ENCODE measurements at regions of chr20 and their contacts with region 1.

Region 1: GRCh38 chr20:50120897-50121693 is 8.1 kb upstream of the UBE2V1 start:
- DNase-seq: peak; percentile 75
- H3K4me3 Mint-ChIP-seq: no peak overlapping the region
- H3K27ac Mint-ChIP-seq: no peak overlapping the region
- H3K4me1 Mint-ChIP-seq: peaks cover 8% of the 10 kb centered on the region
- H3K27me3 Mint-ChIP-seq: no peaks in the 10 kb centered on the region
- CTCF ChIP-seq: peak; percentile 89

Region 2: DNA sequence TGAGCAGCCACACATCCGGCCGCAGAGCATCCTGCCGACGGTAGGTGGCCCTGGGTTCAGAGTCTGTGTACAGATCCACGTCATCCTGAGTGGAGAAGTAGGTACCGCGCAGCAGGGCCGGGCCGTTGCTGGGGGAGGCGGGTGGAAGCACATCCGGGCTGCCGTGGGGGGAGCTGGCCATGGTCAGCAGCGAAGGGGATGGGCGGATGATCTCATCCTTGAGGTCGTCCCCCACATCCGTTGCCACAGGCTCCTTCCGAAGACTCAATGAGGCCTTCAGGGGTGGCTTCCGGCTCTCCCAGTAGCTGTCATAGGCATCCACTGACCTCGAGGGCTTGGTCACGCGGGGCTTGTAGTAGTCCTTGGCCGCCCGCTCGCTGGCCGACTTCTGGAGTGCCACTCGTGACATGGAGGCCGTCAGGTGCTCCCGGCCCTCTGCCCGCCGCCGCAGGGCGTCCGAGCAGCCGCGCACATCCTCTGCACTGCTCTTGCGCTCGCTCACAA is 214.9 kb before region 1 on chr20:
- CTCF ChIA-PET with region 1: no interaction called
- POLR2A ChIA-PET with region 1: no interaction called
- intact Hi-C with region 1: no loop called
- DNase-seq: no peak
- H3K4me3 Mint-ChIP-seq: no peak overlapping the region
- H3K27ac Mint-ChIP-seq: no peak overlapping the region
- H3K4me1 Mint-ChIP-seq: no peaks in the 10 kb centered on the region
- H3K27me3 Mint-ChIP-seq: no peaks in the 10 kb centered on the region
- CTCF ChIP-seq: no peak

Region 3: GRCh38 chr20:50085452-50086365 is 35.4 kb before region 1 on chr20:
- CTCF ChIA-PET with region 1: interaction called, 36 read pairs
- POLR2A ChIA-PET with region 1: interaction called, 177 read pairs
- intact Hi-C with region 1: no loop called
- DNase-seq: peak; percentile 75
- H3K4me3 Mint-ChIP-seq: peak overlapping the region; percentile 8
- H3K27ac Mint-ChIP-seq: peak overlapping the region; percentile 77
- H3K4me1 Mint-ChIP-seq: peaks cover 33% of the 10 kb centered on the region
- H3K27me3 Mint-ChIP-seq: no peaks in the 10 kb centered on the region
- CTCF ChIP-seq: peak; percentile 60

Region 4: DNA sequence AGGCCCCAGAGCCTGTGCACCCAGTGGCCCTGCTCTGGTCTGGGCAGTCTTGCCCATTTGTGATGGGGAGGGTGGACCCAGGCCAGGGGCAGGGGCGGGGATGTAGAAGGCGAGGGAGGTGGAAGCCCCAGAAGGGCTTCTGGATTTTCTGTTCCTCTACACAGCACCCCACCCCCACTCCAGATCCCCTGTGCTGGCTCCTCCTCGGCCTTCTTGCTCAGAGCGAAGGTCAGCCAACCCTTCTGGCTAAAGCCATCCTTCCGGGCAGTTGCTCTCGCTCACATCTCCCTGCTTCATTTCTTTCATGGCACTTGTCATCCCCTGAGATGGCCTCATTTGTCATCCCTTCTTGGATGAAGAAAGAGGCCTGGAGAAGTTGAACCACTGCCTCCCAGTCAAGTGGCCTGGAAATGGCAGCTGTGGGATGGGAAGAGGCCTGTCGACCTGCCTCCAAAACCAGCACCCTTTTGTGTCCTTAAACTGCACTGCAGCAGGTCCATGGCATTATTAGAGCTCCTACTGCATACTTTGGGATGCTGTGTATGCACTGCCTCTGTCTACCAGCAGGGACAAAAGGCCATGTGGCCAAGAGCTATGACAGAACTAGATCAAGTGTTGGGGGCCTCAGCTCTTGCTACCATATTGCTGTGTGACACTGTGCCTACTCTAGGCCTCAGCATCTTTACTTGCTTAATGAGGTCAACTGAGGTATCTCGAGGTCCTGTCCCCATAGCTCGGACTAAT is 12.6 kb after region 1 on chr20:
- CTCF ChIA-PET with region 1: interaction called, 129 read pairs
- POLR2A ChIA-PET with region 1: interaction called, 386 read pairs
- intact Hi-C with region 1: no loop called
- DNase-seq: no peak
- H3K4me3 Mint-ChIP-seq: no peak overlapping the region
- H3K27ac Mint-ChIP-seq: no peak overlapping the region
- H3K4me1 Mint-ChIP-seq: peaks cover 20% of the 10 kb centered on the region
- H3K27me3 Mint-ChIP-seq: no peaks in the 10 kb centered on the region
- CTCF ChIP-seq: no peak

Region 5: GRCh38 chr20:50138479-50139393 is 17.6 kb after region 1 on chr20:
- CTCF ChIA-PET with region 1: interaction called, 129 read pairs
- POLR2A ChIA-PET with region 1: interaction called, 386 read pairs
- intact Hi-C with region 1: no loop called
- DNase-seq: peak; percentile 38
- H3K4me3 Mint-ChIP-seq: peak overlapping the region; percentile 35
- H3K27ac Mint-ChIP-seq: peak overlapping the region; percentile 93
- H3K4me1 Mint-ChIP-seq: peaks cover 46% of the 10 kb centered on the region
- H3K27me3 Mint-ChIP-seq: no peaks in the 10 kb centered on the region
- CTCF ChIP-seq: no peak

Region 6: DNA sequence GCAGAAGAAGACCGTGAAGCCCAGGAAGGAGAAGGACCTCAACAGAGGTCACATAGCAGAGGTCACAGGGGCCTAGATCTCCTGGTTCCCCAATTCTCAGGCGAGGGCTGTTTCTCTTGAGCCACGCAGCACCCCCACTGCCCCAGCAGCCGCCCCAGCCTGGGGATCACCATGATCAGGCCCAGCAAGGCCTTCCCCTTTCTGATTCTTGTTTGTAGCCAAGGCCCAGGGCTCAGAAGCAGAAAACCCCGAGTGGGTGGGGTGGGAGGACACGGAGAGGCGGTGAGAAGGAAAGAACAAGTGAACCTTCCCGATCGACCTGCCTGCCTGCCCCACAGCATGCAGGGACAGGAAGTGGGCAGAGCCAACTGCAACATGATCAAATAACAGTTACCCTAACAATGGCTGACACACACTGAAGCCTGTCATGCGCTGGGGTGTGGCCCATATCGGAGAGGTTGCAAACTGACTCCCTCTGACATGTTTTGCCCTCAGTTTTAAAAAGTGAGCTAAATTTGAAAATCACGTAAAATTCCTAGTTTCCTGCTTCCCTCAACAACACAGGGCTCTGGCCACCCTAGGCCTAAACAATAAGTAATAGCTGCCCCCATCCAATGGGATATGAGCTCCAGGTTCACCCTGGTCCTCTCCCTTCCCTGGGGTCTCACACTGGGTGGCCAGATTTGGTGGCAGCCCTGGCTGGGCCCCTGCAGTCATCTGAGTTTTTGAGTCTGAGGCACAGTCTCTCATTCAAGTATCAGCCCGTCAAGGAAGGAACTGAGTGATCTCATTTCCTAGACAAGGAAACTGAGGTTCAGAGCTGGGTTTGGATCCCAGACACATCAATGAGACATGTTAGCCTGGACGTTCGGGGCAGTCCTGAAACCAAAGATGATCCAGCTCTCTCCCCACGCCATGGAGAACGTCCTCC is 25.9 kb after region 1 on chr20:
- CTCF ChIA-PET with region 1: interaction called, 408 read pairs
- POLR2A ChIA-PET with region 1: interaction called, 386 read pairs
- intact Hi-C with region 1: loop called (anchors 1 kb)
- DNase-seq: peak; percentile 81
- H3K4me3 Mint-ChIP-seq: peak overlapping the region; percentile 61
- H3K27ac Mint-ChIP-seq: peak overlapping the region; percentile 96
- H3K4me1 Mint-ChIP-seq: peaks cover 65% of the 10 kb centered on the region
- H3K27me3 Mint-ChIP-seq: no peaks in the 10 kb centered on the region
- CTCF ChIP-seq: no peak

Region 7: GRCh38 chr20:50153485-50154377 is 32.6 kb after region 1 on chr20 and contains the start of gene PEDS1:
- CTCF ChIA-PET with region 1: interaction called, 408 read pairs
- POLR2A ChIA-PET with region 1: interaction called, 386 read pairs
- intact Hi-C with region 1: loop called (anchors 1 kb)
- DNase-seq: peak; percentile 85
- H3K4me3 Mint-ChIP-seq: peak within 1 kb of the TSS; percentile 87
- H3K27ac Mint-ChIP-seq: peak within 1 kb of the TSS; percentile 94
- H3K4me1 Mint-ChIP-seq: peaks cover 44% of the 10 kb centered on the region
- H3K27me3 Mint-ChIP-seq: no peaks in the 10 kb centered on the region
- CTCF ChIP-seq: no peak
- total RNA-seq, gene PEDS1: 26.0 and 30.5 TPM in 2 replicates

Region 8: DNA sequence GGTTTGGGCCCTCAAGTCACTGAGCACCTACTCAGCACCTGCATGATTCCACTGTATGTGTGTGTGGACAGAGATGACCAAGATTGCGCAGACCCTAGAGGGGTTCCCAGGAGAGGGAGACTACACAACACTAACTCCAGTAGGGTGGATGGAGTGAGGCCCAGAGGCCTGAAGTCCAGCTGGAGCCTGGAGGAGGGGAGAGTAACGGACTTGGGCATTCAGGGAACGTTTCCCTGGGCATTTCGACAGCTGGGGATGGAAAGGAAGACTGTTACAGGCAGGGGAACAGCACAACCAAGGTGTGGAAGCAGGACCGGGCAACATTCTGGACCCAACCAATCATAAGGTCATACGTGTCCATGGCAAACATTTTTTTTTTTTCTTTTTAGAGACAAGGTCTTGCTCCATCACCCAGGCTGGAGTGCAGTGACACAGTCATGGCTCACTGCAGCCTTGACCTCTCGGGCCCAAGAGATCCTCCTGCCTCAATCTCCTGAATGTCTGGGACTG is 58.5 kb after region 1 on chr20:
- CTCF ChIA-PET with region 1: interaction called, 696 read pairs
- POLR2A ChIA-PET with region 1: interaction called, 175 read pairs
- intact Hi-C with region 1: loop called (anchors 2 kb)
- DNase-seq: no peak
- H3K4me3 Mint-ChIP-seq: no peak overlapping the region
- H3K27ac Mint-ChIP-seq: no peak overlapping the region
- H3K4me1 Mint-ChIP-seq: peaks cover 5% of the 10 kb centered on the region
- H3K27me3 Mint-ChIP-seq: no peaks in the 10 kb centered on the region
- CTCF ChIP-seq: no peak

Measured in MCF 10A (cell line).